Endothelial cell of umbilical vein (primary cell): ENCODE measurements at regions of chrX and their contacts with region 1.

Region 1: GRCh38 chrX:154490414-154491083 is at the start of gene SLC10A3:
- DNase-seq: peak; percentile 94
- H3K4me3 ChIP-seq: peak within 1 kb of the TSS; percentile 51 to 68 (median 55)
- H3K27ac ChIP-seq: peak within 1 kb of the TSS; percentile 78
- H3K4me1 ChIP-seq: no peaks in the 10 kb centered on the region
- H3K27me3 ChIP-seq: no peaks in the 10 kb centered on the region
- CTCF ChIP-seq: no peak
- POLR2A ChIP-seq: peak; percentile 80
- total RNA-seq, gene SLC10A3: 19.7 and 22.6 TPM in 2 replicates

Region 2: GRCh38 chrX:154327038-154327820 is 163.3 kb before region 1 on chrX:
- CTCF ChIA-PET with region 1: no interaction called
- POLR2A ChIA-PET with region 1: no interaction called
- dilution Hi-C with region 1: no loop called
- intact Hi-C with region 1: loop called (anchors 1 kb)
- DNase-seq: no peak
- H3K4me3 ChIP-seq: no peak overlapping the region
- H3K27ac ChIP-seq: no peak overlapping the region
- H3K4me1 ChIP-seq: peaks cover 18% of the 10 kb centered on the region
- H3K27me3 ChIP-seq: no peaks in the 10 kb centered on the region
- CTCF ChIP-seq: no peak
- POLR2A ChIP-seq: no peak

Region 3: DNA sequence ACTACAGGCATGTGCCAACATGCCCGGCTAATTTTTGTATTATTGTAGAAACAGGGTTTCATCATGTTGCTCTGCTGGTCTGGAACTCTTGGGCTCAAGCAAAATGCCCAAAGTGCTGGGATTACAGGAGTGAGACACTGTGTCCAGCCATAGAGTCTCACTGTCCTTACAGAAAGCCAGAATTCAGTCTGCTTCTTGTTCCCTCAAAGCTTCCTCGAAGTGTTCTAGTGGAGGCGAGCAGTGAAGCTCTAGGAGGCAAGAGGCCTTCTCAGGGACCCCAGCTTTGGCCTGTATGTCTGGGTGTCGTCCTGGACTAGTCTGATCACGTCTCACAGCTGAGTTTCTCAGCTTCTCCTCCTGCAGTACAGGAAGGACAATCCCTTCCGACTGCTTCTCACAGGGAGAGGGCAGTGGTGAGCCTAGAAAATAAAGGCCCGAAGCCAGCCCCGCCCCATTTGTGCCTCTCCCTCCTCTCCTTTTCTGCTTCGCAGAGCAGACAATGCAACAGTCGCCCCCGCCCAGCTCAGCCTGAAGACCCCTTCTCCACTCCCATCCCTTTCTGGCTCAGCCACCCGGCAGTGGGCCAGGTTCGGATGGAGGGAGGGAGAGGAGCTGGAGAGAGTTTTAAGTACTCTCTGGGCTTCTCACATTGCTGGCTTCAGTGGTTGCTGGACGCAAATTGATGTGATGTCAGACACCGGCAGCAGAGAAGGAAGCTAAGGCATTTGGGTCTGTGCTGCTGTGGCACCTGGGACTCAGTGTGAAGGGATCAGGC is 36.5 kb after region 1 on chrX:
- CTCF ChIA-PET with region 1: interaction called, 11 read pairs
- POLR2A ChIA-PET with region 1: no interaction called
- dilution Hi-C with region 1: no loop called
- intact Hi-C with region 1: no loop called
- DNase-seq: peak; percentile 71
- H3K4me3 ChIP-seq: peak overlapping the region in 1 of 3 experiments; percentile 22
- H3K27ac ChIP-seq: peak overlapping the region; percentile 22
- H3K4me1 ChIP-seq: peaks cover 4% of the 10 kb centered on the region
- H3K27me3 ChIP-seq: no peaks in the 10 kb centered on the region
- CTCF ChIP-seq: peak; percentile 37 to 43
- POLR2A ChIP-seq: no peak

Region 4: DNA sequence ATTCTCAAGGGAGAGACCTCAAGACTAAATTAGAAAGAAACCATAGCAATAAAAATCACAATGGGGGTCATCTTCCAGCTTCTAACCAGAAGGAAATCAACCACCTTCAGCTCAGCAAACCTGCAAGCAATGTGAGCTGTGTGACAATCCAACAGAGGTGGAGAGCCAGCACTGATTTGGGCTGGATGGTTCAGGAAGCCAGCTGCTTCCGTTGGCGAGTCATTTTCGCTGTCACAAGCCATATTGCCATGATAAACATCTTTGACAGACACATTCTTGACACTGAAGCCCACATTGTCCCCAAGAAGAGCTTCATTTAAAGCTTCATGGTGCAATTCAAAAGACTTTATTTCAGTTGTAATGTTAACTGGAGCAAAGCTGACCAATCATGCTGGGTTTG is 418.3 kb after region 1 on chrX:
- CTCF ChIA-PET with region 1: no interaction called
- POLR2A ChIA-PET with region 1: no interaction called
- dilution Hi-C with region 1: no loop called
- intact Hi-C with region 1: no loop called
- DNase-seq: no peak
- H3K4me3 ChIP-seq: no peak overlapping the region
- H3K27ac ChIP-seq: no peak overlapping the region
- H3K4me1 ChIP-seq: no peaks in the 10 kb centered on the region
- H3K27me3 ChIP-seq: peaks cover 0 to 4% of the 10 kb centered on the region in 2 experiments
- CTCF ChIP-seq: no peak
- POLR2A ChIP-seq: no peak

Region 5: GRCh38 chrX:155009994-155010472 is 519.5 kb after region 1 on chrX:
- CTCF ChIA-PET with region 1: no interaction called
- POLR2A ChIA-PET with region 1: no interaction called
- dilution Hi-C with region 1: no loop called
- intact Hi-C with region 1: no loop called
- DNase-seq: peak; percentile 74
- H3K4me3 ChIP-seq: no peak overlapping the region
- H3K27ac ChIP-seq: no peak overlapping the region
- H3K4me1 ChIP-seq: no peaks in the 10 kb centered on the region
- H3K27me3 ChIP-seq: no peaks in the 10 kb centered on the region
- CTCF ChIP-seq: no peak
- POLR2A ChIP-seq: no peak